Naive thymus-derived CD4-positive, alpha-beta T cell (primary cell): ENCODE measurements at regions of chr17 and their contacts with region 1.

Region 1: GRCh38 chr17:79915850-79916430 is 76.7 kb upstream of the CBX4 start:
- DNase-seq: peak in 4 of 9 donors; percentile 11 to 47 (median 30)
- ATAC-seq: peak; percentile 40
- H3K4me3 ChIP-seq: no peak overlapping the region
- H3K4me3 Mint-ChIP-seq: no peak overlapping the region
- H3K27ac ChIP-seq: no peak overlapping the region
- H3K27ac Mint-ChIP-seq: no peak overlapping the region
- H3K4me1 ChIP-seq: no peaks in the 10 kb centered on the region
- H3K4me1 Mint-ChIP-seq: peaks cover 0 to 5% (median 0%) of the 10 kb centered on the region in 7 donors
- H3K27me3 ChIP-seq: no peaks in the 10 kb centered on the region
- H3K27me3 Mint-ChIP-seq: peaks cover 0 to 14% (median 0%) of the 10 kb centered on the region in 5 donors

Region 2: GRCh38 chr17:79741751-79742588 is 174.0 kb before region 1 on chr17:
- CTCF ChIA-PET with region 1: interaction called, 4 read pairs
- POLR2A ChIA-PET with region 1: no interaction called
- intact Hi-C with region 1: loop called (anchors 1 to 10 kb)
- DNase-seq: peak; percentile 50 to 85 (median 73)
- ATAC-seq: peak; percentile 66
- H3K4me3 ChIP-seq: no peak overlapping the region
- H3K4me3 Mint-ChIP-seq: peak overlapping the region in 1 of 10 donors; percentile 16
- H3K27ac ChIP-seq: no peak overlapping the region
- H3K27ac Mint-ChIP-seq: peak overlapping the region in 2 of 9 donors; percentile 43 to 76
- H3K4me1 ChIP-seq: peaks cover 6 to 21% of the 10 kb centered on the region in 2 donors
- H3K4me1 Mint-ChIP-seq: peaks cover 0 to 24% (median 15%) of the 10 kb centered on the region in 7 donors
- H3K27me3 ChIP-seq: peaks cover 0 to 7% of the 10 kb centered on the region in 2 donors
- H3K27me3 Mint-ChIP-seq: peaks cover 18 to 40% (median 34%) of the 10 kb centered on the region in 5 donors

Region 3: DNA sequence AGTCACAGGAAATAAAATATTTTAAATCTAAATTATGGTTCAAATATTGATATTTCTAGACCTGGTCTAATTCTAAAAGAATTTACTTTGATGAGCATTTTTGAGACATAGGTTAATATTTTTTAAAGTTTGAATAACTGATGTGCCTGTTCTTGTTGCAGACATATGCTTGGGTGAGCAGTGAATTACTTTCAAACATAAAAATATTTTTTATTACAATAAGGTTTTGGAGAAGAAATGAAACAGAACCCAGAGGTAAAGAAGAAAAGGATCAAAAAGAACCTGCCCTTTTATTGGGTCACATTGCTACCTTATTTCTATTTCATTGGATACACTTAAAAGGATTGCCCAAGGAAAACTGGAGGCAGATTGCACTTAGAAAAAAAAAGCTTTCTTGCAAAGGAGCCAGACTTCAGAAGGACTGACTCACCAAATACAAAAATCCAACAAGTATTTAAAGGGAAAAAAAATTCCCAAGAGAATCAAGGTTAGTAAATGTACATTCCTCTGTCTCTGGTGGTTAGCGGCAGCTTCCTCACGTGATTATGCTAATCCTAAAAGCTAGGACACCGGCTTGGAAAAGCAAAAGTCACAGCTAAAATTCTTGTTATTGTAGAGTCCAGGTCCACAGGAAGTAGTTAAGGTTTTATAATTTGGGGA is 166.7 kb before region 1 on chr17:
- CTCF ChIA-PET with region 1: interaction called, 3 read pairs
- POLR2A ChIA-PET with region 1: no interaction called
- intact Hi-C with region 1: loop called (anchors 1 to 10 kb)
- DNase-seq: no peak
- ATAC-seq: no peak
- H3K4me3 ChIP-seq: no peak overlapping the region
- H3K4me3 Mint-ChIP-seq: no peak overlapping the region
- H3K27ac ChIP-seq: no peak overlapping the region
- H3K27ac Mint-ChIP-seq: no peak overlapping the region
- H3K4me1 ChIP-seq: peaks cover 0 to 25% of the 10 kb centered on the region in 2 donors
- H3K4me1 Mint-ChIP-seq: peaks cover 0 to 28% (median 21%) of the 10 kb centered on the region in 7 donors
- H3K27me3 ChIP-seq: peaks cover 0 to 19% of the 10 kb centered on the region in 2 donors
- H3K27me3 Mint-ChIP-seq: peaks cover 34 to 60% (median 42%) of the 10 kb centered on the region in 5 donors

Region 4: DNA sequence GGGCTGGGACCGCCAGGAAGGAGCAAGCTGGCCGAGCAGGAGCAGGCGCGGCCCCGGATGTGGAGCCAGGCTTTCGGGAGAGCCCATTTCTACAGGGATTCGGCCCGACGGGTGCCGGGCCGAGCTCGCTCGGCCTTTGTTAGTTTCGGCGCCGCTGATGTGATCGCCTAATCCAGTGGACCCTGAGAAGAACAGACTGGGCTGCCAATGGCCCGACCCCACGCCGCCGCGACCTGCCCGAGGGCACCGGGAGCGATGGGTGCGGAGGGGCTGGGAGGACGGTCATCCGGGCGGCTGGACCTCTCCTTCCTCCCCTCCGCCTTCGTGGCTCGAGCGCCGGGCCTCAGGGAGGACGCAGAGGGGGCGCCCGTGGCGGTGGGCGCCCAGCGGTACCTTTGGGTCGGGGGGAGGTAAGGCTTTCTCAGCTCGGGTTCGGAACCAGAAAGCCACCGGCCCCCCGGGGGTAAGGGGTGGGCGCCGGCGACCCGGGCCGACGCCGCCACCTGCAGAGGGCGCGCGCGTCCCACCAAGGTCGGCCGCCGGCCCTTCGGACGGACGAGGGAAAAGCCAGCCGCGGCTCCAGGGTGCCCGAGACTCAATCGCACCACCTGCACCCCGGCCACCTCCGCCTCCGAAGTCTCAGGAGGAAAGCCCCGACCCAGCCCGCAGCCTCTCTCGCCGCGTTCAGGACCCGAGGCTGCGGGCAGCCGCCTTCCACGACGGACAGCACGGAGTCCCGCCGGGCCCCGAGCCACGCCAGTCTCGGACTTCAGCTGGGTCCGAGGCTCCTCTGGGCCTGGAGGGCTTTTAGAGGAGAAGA is 126.2 kb before region 1 on chr17:
- CTCF ChIA-PET with region 1: interaction called, 3 read pairs
- POLR2A ChIA-PET with region 1: no interaction called
- intact Hi-C with region 1: loop called in 1 of 2 experiments (anchors 5 kb)
- DNase-seq: peak in 1 of 9 donors; percentile 60
- ATAC-seq: peak; percentile 63
- H3K4me3 ChIP-seq: no peak overlapping the region
- H3K4me3 Mint-ChIP-seq: peak overlapping the region in 6 of 10 donors; percentile 13 to 69 (median 32)
- H3K27ac ChIP-seq: no peak overlapping the region
- H3K27ac Mint-ChIP-seq: peak overlapping the region in 1 of 9 donors; percentile 48
- H3K4me1 ChIP-seq: peaks cover 11 to 21% of the 10 kb centered on the region in 2 donors
- H3K4me1 Mint-ChIP-seq: peaks cover 0 to 22% (median 12%) of the 10 kb centered on the region in 7 donors
- H3K27me3 ChIP-seq: peaks cover 6 to 21% of the 10 kb centered on the region in 2 donors
- H3K27me3 Mint-ChIP-seq: peaks cover 40 to 61% (median 58%) of the 10 kb centered on the region in 5 donors

Region 5: GRCh38 chr17:80053102-80053501 is 137.2 kb after region 1 on chr17:
- CTCF ChIA-PET with region 1: no interaction called
- POLR2A ChIA-PET with region 1: no interaction called
- intact Hi-C with region 1: no loop called
- DNase-seq: no peak
- ATAC-seq: no peak
- H3K4me3 ChIP-seq: no peak overlapping the region
- H3K4me3 Mint-ChIP-seq: no peak overlapping the region
- H3K27ac ChIP-seq: no peak overlapping the region
- H3K27ac Mint-ChIP-seq: no peak overlapping the region
- H3K4me1 ChIP-seq: no peaks in the 10 kb centered on the region
- H3K4me1 Mint-ChIP-seq: no peaks in the 10 kb centered on the region
- H3K27me3 ChIP-seq: no peaks in the 10 kb centered on the region
- H3K27me3 Mint-ChIP-seq: peaks cover 0 to 10% (median 0%) of the 10 kb centered on the region in 5 donors